GM12878 (cell line): ENCODE measurements at regions of chr15 and their contacts with region 1.

Region 1: DNA sequence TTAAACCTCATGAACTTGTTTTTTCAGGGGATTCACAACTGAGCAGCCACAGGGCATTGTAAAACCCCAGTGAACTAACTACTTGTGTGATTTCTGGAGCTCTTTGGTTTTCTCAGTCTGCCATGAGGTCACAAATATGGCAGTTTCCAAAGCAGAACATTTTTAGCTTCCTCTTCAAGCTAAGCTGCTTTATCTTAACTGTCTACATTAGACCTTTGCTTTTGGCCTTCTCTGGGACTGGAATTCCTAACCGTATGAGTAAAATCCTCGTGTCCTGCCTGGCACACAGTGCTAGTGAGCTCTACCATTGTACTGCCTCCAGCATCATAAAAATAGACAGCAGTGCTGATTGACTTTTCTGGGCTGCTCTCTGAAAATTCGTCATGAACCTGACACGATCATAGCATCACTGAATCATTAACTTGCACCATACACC is 22.1 kb downstream of the CDIN1 start:
- DNase-seq: no peak
- ATAC-seq: peak; percentile 87
- H3K4me3 ChIP-seq: no peak overlapping the region
- H3K27ac ChIP-seq: 0 out of 2 replicates have a peak overlapping the region, but pooled peaks have one; percentile 20
- H3K4me1 ChIP-seq: no peaks in the 10 kb centered on the region
- H3K27me3 ChIP-seq: no peaks in the 10 kb centered on the region
- CTCF ChIP-seq: no peak
- EP300 ChIP-seq: no peak; a peak in 1 of 4 replicates
- POLR2A ChIP-seq: no peak
- RAD21 ChIP-seq: no peak

Region 2: GRCh38 chr15:36458411-36458810 is 143.1 kb before region 1 on chr15:
- CTCF ChIA-PET with region 1: no interaction called
- POLR2A ChIA-PET with region 1: no interaction called
- RAD21 ChIA-PET with region 1: no interaction called
- SMC1A ChIA-PET with region 1: no interaction called
- in situ Hi-C with region 1: no loop called
- intact Hi-C with region 1: no loop called
- DNase-seq: no peak
- ATAC-seq: no peak
- H3K4me3 ChIP-seq: no peak overlapping the region
- H3K27ac ChIP-seq: no peak overlapping the region
- H3K4me1 ChIP-seq: no peaks in the 10 kb centered on the region
- H3K27me3 ChIP-seq: no peaks in the 10 kb centered on the region
- CTCF ChIP-seq: no peak
- EP300 ChIP-seq: no peak
- POLR2A ChIP-seq: no peak
- RAD21 ChIP-seq: no peak

Region 3: DNA sequence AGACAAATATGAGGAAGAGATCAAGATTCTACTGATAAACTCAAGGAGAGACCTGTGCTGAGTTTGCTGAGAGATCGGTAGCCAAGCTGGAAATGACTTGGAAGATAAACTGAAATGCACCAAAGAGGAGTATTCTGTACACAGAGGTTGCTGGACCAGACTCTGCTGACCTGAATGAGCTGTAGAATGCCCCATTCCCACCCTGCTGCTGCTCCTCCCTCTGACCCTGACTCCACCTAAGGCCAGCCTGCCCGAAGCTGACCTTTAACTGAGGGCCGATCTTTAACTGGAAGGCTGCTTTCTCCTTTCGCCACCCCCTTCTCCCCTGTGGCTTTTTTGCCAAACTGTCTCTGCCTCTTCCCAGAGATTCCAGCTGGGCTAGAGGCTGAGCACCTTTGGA is 12.5 kb after region 1 on chr15:
- CTCF ChIA-PET with region 1: interaction called, 4 read pairs
- POLR2A ChIA-PET with region 1: interaction called, 4 read pairs
- RAD21 ChIA-PET with region 1: interaction called, 3 read pairs
- SMC1A ChIA-PET with region 1: interaction called, 12 read pairs
- in situ Hi-C with region 1: no loop called
- intact Hi-C with region 1: no loop called
- DNase-seq: no peak
- ATAC-seq: no peak
- H3K4me3 ChIP-seq: no peak overlapping the region
- H3K27ac ChIP-seq: no peak overlapping the region
- H3K4me1 ChIP-seq: peaks cover 12% of the 10 kb centered on the region
- H3K27me3 ChIP-seq: no peaks in the 10 kb centered on the region
- CTCF ChIP-seq: no peak
- EP300 ChIP-seq: no peak
- POLR2A ChIP-seq: no peak
- RAD21 ChIP-seq: no peak